K562 (cell line): ENCODE measurements at regions of chr21 and their contacts with region 1.

Region 1: GRCh38 chr21:20822666-20823065 is 175.5 kb upstream of the NCAM2 start:
- DNase-seq: no peak
- ATAC-seq: no peak
- H3K4me3 ChIP-seq: no peak overlapping the region
- H3K27ac ChIP-seq: no peak overlapping the region
- H3K4me1 ChIP-seq: no peaks in the 10 kb centered on the region
- H3K27me3 ChIP-seq: no peaks in the 10 kb centered on the region
- CTCF ChIP-seq: no peak
- EP300 ChIP-seq: no peak
- POLR2A ChIP-seq: no peak
- RAD21 ChIP-seq: no peak

Region 2: DNA sequence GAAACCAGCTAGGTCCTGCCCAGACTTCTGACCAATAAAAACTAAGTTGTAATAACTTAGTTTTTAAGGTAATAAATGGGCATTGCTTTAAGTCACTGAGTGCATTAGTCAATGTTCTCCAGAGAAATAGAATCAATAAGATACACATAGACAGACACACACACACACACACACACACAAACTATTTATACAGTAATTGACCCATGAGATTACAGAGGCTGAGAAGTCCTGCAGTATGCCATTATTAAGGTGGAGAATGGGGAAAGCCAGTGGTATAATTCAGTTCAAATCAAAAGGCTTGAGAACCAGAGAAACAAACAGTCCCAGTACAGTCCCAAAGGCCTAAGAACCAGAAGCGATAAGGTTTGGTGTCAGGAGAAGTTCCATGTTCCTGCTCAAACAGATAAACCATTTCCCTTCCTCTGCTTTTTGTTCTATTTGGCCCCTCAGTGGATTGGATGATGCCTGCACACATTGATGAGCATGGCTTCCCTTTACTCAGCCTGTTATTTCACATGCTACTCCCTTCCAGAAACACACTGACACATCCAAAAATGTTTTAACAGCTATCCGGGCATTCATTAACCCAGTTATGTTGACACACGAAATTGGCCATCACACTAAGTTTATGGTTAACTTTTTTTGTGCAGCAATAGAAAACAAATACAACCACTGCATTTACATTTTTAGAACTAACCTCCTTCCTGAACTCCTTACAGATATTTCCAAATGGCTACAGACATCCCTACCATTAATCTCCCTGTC is 652.7 kb before region 1 on chr21:
- CTCF ChIA-PET with region 1: no interaction called
- POLR2A ChIA-PET with region 1: no interaction called
- in situ Hi-C with region 1: loop called (anchors 25 kb)
- intact Hi-C with region 1: no loop called
- DNase-seq: peak in 1 of 4 experiments; percentile 11
- ATAC-seq: no peak
- H3K4me3 ChIP-seq: no peak overlapping the region
- H3K27ac ChIP-seq: no peak overlapping the region
- H3K4me1 ChIP-seq: peaks cover 0 to 2% of the 10 kb centered on the region in 2 experiments; a peak in 2 of 5 replicates
- H3K27me3 ChIP-seq: no peaks in the 10 kb centered on the region
- CTCF ChIP-seq: no peak
- EP300 ChIP-seq: no peak
- POLR2A ChIP-seq: no peak
- RAD21 ChIP-seq: no peak